Heart left ventricle (tissue), 16 donors: ENCODE measurements at regions of chr2 and their contacts with region 1.

Region 1: GRCh38 chr2:68918497-68918896 is 34.2 kb downstream of the GKN2 start:
- DNase-seq: no peak
- ATAC-seq: no peak
- H3K4me3 ChIP-seq: no peak overlapping the region
- H3K27ac ChIP-seq: no peak overlapping the region
- H3K4me1 ChIP-seq: no peaks in the 10 kb centered on the region
- H3K27me3 ChIP-seq: no peaks in the 10 kb centered on the region
- CTCF ChIP-seq: no peak
- POLR2A ChIP-seq: no peak

Region 2: GRCh38 chr2:68475110-68475509 is 443.4 kb before region 1 on chr2:
- intact Hi-C with region 1: loop called in 2 of 10 experiments (anchors 5 to 10 kb)
- DNase-seq: no peak
- ATAC-seq: no peak
- H3K4me3 ChIP-seq: no peak overlapping the region
- H3K27ac ChIP-seq: no peak overlapping the region
- H3K4me1 ChIP-seq: no peaks in the 10 kb centered on the region
- H3K27me3 ChIP-seq: no peaks in the 10 kb centered on the region
- CTCF ChIP-seq: no peak
- POLR2A ChIP-seq: no peak

Region 3: GRCh38 chr2:68715353-68716041 is 203.0 kb before region 1 on chr2:
- intact Hi-C with region 1: loop called in 1 of 10 experiments (anchors 5 kb)
- DNase-seq: peak in 2 of 5 donors; percentile 49 to 52
- ATAC-seq: peak in 3 of 4 donors; percentile 62 to 71 (median 68)
- H3K4me3 ChIP-seq: no peak overlapping the region
- H3K27ac ChIP-seq: peak overlapping the region in 1 of 12 donors; percentile 88
- H3K4me1 ChIP-seq: peaks cover 0 to 35% (median 0%) of the 10 kb centered on the region in 12 donors
- H3K27me3 ChIP-seq: peaks cover 0 to 6% (median 0%) of the 10 kb centered on the region in 9 donors
- CTCF ChIP-seq: peak; percentile 43 to 72 (median 54)
- POLR2A ChIP-seq: no peak